Activated T-helper 1 cell treated with anti-CD3 and anti-CD28 coated beads, Interleukin-12 subunit alpha, Interleukin-12 subunit beta, Interleukin-2, Interleukin-4 antibody, amounts not matched to agents 30 ng/mL and 10 ng/mL and 1 ng/mL, durations not matched to agents 14 hours and 24 hours and 36 hours (primary cell): ENCODE measurements at regions of chr4 and their contacts with region 1.

Region 1: GRCh38 chr4:128191115-128191781 is 96.4 kb downstream of the PGRMC2 start:
- DNase-seq: peak; percentile 56
- H3K4me3 Mint-ChIP-seq: no peak overlapping the region
- H3K27ac Mint-ChIP-seq: no peak overlapping the region
- H3K4me1 Mint-ChIP-seq: peaks cover 16% of the 10 kb centered on the region
- H3K27me3 Mint-ChIP-seq: no peaks in the 10 kb centered on the region

Region 2: DNA sequence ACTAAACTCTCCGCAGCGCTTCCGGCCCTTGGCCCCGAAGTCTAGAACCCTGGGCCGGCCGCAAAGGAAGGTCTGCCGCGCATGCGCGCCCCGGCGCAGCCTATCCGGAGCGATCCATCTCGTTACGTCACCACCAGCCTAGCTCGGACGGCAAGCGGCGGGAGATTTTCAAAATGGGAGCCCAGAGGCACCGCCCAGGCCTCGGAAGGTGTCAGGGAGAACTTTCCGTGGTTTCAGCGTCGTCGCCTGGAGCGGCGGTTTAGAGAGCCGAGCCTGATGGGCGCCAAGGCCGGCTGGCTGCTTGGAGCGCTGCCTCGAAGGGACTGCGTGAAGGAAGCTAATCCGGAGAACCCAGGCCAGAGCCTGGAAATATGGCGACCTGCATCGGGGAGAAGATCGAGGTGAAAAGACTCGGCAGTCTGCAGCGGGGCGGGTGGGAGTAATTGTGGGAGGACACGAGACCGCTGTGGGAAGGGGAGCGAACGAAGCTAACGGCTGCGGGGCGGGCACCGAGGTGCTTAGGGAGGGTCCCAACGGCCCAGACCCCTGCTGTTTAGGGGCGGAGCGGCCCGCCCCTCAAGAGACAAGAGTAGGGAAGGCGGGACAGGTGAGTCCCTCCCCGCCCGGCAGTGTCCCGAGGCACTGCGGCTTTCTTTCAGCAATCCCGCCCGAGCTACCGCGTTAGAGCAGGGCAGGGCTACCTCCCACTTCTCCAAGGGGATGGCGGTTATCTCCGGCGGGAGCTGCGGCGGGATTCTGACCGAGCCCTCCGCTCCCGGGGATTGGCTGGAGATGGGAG is 310.3 kb before region 1 on chr4 and contains the start of gene PLK4:
- intact Hi-C with region 1: no loop called
- DNase-seq: peak; percentile 96
- H3K4me3 Mint-ChIP-seq: peak within 1 kb of the TSS; percentile 91
- H3K27ac Mint-ChIP-seq: peak within 1 kb of the TSS; percentile 91
- H3K4me1 Mint-ChIP-seq: peaks cover 31% of the 10 kb centered on the region
- H3K27me3 Mint-ChIP-seq: no peaks in the 10 kb centered on the region
- total RNA-seq, gene PLK4: 40.7 and 41.2 TPM in 2 replicates

Region 3: GRCh38 chr4:128060699-128061565 is 130.3 kb before region 1 on chr4 and contains the start of gene LARP1B:
- intact Hi-C with region 1: loop called (anchors 5 kb)
- DNase-seq: peak; percentile 93
- H3K4me3 Mint-ChIP-seq: peak within 1 kb of the TSS; percentile 88
- H3K27ac Mint-ChIP-seq: peak within 1 kb of the TSS; percentile 95
- H3K4me1 Mint-ChIP-seq: peaks cover 6% of the 10 kb centered on the region
- H3K27me3 Mint-ChIP-seq: no peaks in the 10 kb centered on the region
- total RNA-seq, gene LARP1B: 33.3 and 34.5 TPM in 2 replicates

Region 4: DNA sequence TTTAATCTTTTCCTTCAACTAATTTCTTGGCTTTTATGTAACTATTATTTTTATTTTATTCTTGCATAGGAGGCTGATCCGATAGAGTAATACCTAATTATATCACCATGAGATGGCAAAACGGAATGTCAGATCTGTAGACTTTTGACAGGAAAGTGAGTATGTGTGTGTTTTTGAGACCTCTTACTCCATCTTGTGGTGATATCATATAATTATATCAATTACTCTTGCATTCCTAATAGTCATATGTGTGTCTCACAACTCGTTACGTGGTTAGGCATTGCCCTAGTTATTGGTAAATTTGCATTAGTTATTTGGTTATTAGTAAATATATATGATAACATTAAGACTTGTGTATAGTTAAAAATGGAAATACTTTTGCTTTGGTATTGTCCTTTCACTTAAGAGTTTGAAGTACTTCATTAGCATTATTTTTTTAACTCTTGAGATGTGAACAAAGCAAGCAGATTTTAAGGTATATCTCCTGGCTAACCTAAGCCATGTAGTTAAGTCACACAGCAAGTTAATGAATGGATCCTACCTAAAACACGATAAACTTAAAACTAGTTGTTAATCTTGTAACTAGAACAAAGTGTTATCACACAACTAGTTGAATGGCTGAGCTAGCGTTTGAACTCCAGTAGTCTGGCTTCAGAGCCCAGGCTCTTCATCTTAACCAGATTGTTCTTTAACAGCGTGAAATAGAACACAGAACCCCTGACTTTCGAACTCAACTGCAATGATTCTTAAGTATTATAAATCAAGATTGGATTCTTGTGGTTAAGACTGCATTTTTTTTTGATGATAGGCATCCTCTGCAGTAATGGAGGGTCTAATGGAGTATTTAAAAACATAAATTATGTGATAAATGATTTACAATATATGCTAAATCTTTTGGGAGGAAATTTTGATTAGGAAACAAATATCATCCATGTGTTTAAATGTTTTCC is 29.3 kb after region 1 on chr4:
- intact Hi-C with region 1: loop called (anchors 2 kb)
- DNase-seq: no peak
- H3K4me3 Mint-ChIP-seq: no peak overlapping the region
- H3K27ac Mint-ChIP-seq: no peak overlapping the region
- H3K4me1 Mint-ChIP-seq: no peaks in the 10 kb centered on the region
- H3K27me3 Mint-ChIP-seq: no peaks in the 10 kb centered on the region

Region 5: DNA sequence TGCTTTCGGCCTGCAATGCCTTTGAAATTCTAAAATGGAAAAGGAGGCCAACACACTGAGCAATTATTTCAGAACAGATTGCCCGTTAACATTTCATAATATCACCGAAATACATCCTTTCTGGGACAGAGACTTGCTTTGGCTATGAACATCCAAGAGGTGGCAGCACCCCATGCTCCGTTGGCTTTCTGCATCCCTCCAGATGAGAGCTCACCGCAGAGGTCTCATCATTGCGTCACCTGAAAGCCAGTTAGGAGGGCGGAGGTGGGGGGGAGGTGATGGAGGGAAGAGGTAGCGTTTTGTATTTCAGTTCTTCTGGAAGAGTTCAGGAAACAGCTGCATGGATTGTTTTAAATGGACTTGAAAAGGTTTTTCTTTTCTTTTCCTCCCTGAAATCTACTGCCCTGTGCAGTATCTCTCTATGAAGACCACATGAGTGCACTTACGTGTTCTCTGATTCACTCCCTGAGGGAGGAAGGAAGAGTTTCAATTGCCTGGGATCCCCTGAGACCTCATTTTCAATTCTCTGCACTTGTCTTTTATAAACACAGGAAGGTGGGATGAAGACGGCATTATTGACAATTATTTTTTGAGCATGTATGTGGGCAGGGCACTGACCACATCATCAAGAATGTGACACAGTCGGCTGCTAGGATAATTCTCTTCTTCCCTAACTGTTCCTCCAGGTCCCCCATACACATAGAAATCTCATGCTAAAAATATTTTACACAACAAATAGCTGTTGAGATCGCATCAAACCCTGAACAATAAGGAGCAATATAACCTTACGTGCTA is 263.2 kb after region 1 on chr4:
- intact Hi-C with region 1: loop called (anchors 1 kb)
- DNase-seq: peak; percentile 20
- H3K4me3 Mint-ChIP-seq: no peak overlapping the region
- H3K27ac Mint-ChIP-seq: no peak overlapping the region
- H3K4me1 Mint-ChIP-seq: peaks cover 4% of the 10 kb centered on the region
- H3K27me3 Mint-ChIP-seq: peaks cover 11% of the 10 kb centered on the region

Region 6: DNA sequence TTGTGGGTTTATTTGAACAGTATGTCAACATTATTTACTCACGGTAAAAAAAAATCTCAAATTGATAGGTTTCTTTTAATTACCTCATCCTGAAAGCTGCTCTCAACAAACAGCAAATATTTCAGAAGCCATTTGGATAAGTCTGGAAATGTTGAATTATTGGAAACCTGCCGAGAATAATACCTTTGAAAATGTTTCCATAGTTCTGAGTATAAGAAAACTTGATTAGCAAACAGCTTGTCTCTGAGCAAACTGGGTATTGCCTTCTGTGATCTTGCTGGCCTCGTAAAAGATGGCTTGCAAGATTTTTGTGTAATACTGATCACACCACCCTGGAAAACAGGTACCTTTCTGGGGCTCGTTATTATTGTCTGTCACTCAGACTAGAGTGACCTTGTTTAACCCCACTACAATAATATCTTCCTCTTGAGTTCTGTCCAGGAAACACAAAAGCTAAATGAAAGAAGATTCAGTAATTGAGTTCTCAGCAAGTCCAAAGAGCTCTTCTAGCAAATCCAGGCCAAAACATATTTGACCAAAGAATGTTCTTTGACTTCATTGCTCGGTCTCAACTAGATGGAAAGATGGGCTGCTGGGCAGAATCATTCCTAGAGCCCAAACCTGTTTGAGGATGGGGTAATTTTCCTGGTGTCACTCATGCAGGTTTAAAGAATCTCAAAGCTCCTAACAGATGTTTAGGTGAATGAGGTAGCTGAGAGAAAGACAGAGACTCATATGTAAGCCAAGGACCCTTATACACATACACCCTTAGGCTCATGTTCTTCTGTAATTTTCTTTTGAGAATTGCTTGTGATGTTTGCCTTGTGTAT is 362.7 kb after region 1 on chr4:
- intact Hi-C with region 1: loop called (anchors 1 kb)
- DNase-seq: no peak
- H3K4me3 Mint-ChIP-seq: peak overlapping the region; percentile 88
- H3K27ac Mint-ChIP-seq: no peak overlapping the region
- H3K4me1 Mint-ChIP-seq: peaks cover 13% of the 10 kb centered on the region
- H3K27me3 Mint-ChIP-seq: peaks cover 7% of the 10 kb centered on the region

Region 7: DNA sequence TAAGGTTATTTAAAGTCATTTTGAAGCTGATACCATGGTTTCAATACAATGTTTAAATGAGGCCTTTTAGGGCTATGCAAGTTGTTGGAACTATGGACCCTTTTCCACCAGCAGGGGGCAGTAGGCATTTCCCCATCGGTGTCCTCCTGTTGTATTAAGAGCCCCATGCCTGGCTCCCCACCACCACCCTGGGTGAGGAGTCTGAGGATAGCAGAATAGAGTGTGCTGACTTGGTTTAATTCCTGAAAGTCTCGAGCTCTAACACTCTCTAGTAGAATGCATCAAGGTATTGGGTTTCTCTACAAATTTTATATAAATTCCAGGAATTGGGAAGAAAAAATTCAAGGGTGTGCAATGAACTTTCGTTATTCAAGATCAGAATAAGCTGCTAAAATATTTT is 383.5 kb after region 1 on chr4:
- intact Hi-C with region 1: loop called (anchors 2 kb)
- DNase-seq: peak; percentile 33
- H3K4me3 Mint-ChIP-seq: no peak overlapping the region
- H3K27ac Mint-ChIP-seq: no peak overlapping the region
- H3K4me1 Mint-ChIP-seq: no peaks in the 10 kb centered on the region
- H3K27me3 Mint-ChIP-seq: peaks cover 5% of the 10 kb centered on the region

Region 8: GRCh38 chr4:128863312-128864075 is 672.2 kb after region 1 on chr4:
- intact Hi-C with region 1: loop called (anchors 1 kb)
- DNase-seq: peak; percentile 34
- H3K4me3 Mint-ChIP-seq: peak overlapping the region; percentile 27
- H3K27ac Mint-ChIP-seq: peak overlapping the region; percentile 87
- H3K4me1 Mint-ChIP-seq: peaks cover 53% of the 10 kb centered on the region
- H3K27me3 Mint-ChIP-seq: no peaks in the 10 kb centered on the region